ENCODE measurements at regions of chr15 and their contacts with region 1.

Region 1: GRCh38 chr15:58070801-58071418 is 5.4 kb upstream of the ALDH1A2 start:
- DNase-seq: peak; percentile 10
- CTCF ChIP-seq: peak; percentile 80

Region 2: GRCh38 chr15:57561041-57561711 is 509.7 kb before region 1 on chr15:
- CTCF ChIA-PET with region 1: interaction called, 12 read pairs
- POLR2A ChIA-PET with region 1: no interaction called
- DNase-seq: peak; percentile 72
- CTCF ChIP-seq: peak; percentile 78

Region 3: DNA sequence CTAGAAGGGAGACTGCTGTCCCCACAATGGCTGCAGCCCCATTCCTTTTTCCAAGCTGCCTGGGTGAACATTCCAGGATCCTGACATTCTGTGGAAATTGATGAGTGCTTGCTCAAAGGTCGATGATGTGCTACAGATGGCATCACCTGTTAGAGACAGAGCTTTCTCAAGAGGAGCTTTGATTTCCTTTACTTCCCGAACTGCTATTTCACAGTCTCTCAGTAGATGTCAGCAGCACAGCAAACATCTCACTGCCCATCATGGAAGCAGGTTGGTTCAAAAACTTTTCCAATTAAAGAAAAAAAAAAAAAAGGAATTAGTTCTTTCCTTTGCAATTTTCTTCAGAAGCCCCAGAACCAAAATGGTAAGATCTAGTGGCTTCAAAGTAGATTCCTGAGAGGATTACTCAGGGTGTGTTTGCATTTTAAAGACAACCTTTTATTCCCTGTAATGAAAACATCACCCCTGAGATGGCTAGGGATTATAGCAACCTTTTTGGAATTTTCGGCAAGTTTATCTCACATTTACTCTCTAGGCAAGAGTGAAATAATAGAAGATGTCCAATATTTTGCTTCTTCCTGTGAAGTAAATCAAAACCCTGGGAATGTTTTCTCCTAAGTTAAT is 319.6 kb before region 1 on chr15:
- CTCF ChIA-PET with region 1: interaction called, 10 read pairs
- POLR2A ChIA-PET with region 1: no interaction called
- DNase-seq: peak; percentile 26
- CTCF ChIP-seq: peak; percentile 43

Region 4: DNA sequence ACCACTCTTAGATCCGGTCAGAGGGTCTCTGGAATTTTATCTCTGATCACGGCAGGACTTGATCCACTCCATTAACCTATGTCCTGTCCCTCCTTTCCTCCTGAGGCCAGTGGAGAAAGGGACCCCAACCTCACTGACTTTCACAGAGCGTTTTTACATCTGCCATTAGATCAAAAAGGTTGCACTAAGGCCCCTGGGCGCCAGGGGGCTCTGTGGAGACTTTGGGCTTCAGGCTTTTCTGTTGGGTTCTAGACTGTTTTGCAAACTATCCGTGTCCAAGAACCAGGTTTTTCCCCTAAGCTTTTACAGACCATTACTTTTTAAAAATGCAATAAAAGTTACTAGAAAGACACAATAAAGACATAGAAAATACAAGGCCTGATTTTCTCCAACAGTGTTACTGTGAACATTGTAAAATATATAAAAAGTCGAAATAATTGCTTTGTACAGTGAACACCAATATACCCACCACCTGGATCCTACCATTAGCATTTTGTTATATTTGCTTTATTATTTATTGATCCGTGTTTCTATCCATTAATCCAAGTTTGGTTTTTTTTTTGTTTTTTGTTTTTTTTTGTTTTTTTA is 204.7 kb before region 1 on chr15:
- CTCF ChIA-PET with region 1: interaction called, 44 read pairs
- POLR2A ChIA-PET with region 1: no interaction called
- DNase-seq: peak; percentile 45
- CTCF ChIP-seq: peak; percentile 71

Region 5: GRCh38 chr15:58043192-58043903 is 27.6 kb before region 1 on chr15:
- CTCF ChIA-PET with region 1: interaction called, 10 read pairs
- POLR2A ChIA-PET with region 1: no interaction called
- DNase-seq: peak; percentile 10
- CTCF ChIP-seq: peak; percentile 56

Region 6: DNA sequence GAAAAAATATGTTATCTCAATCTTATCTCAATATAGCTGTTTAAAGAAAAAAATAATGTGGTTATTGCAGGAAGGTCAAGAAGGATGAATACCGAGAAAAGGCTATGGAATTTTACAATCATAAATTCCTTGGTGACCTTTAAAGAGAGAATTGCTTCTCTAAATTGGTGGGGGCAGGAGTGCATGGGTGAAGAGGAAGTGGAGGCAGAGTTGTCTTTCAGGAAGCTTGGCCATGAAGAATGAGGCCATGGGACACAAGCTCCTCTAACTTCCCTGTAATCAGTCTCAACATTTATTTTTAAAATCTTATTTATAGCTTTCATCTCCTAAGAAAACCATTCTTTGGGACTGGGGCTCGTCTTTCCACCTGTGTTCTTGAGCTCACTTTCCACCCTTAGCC is 17.0 kb after region 1 on chr15:
- CTCF ChIA-PET with region 1: interaction called, 17 read pairs
- POLR2A ChIA-PET with region 1: no interaction called
- DNase-seq: no peak
- CTCF ChIP-seq: no peak